ENCODE measurements at regions of chr2 and their contacts with region 1.

Region 1: DNA sequence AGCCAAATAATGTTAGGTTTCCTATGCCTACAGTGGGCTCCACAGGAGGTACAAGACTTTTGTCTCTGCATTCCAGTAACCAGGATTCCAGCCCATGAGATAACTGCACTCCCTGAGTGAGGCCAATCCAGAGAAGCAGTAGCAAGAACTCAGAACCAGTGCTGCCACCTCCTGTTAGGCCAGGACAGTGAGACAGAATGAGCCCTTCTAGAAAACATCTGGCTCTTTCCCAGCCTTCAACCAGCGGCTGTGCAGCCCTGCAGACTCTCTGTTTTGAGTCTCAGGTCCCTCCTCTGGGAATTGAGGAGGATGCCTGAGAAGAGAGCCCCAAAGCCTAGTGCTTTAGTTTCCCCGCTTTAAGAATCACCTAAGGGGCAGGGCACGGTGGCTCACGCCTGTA is 44.2 kb downstream of the ARID5A start:
- DNase-seq: no peak
- H3K4me3 ChIP-seq: no peak overlapping the region
- H3K27ac ChIP-seq: no peak overlapping the region
- H3K4me1 ChIP-seq: no peaks in the 10 kb centered on the region
- H3K27me3 ChIP-seq: no peaks in the 10 kb centered on the region
- CTCF ChIP-seq: no peak

Region 2: DNA sequence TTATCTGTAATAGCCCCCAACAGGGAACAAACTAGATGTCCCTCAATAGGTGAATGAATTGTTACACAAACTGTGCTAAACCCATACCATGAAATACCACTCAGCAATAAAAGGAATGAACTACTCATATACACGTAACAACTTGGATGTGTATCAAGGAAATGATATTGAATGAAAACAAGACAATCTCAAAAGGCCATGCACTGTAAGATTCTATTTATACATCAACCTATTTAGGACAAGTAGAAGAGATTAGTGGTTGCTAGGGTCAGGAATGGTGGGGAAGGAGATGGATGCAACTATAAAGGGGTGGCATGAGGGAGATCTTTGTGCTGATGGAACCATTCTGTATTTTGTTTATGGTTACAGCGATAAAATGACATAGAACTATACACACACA is 10.3 kb after region 1 on chr2:
- CTCF ChIA-PET with region 1: no interaction called
- POLR2A ChIA-PET with region 1: interaction called, 12 read pairs
- intact Hi-C with region 1: no loop called
- DNase-seq: no peak
- H3K4me3 ChIP-seq: no peak overlapping the region
- H3K27ac ChIP-seq: no peak overlapping the region
- H3K4me1 ChIP-seq: no peaks in the 10 kb centered on the region
- H3K27me3 ChIP-seq: no peaks in the 10 kb centered on the region
- CTCF ChIP-seq: no peak

Measured in PC-9 (cell line).